Activated CD8-positive, alpha-beta T cell treated with anti-CD3 and anti-CD28 coated beads for 36 hours (primary cell): ENCODE measurements at regions of chr1 and their contacts with region 1.

Region 1: DNA sequence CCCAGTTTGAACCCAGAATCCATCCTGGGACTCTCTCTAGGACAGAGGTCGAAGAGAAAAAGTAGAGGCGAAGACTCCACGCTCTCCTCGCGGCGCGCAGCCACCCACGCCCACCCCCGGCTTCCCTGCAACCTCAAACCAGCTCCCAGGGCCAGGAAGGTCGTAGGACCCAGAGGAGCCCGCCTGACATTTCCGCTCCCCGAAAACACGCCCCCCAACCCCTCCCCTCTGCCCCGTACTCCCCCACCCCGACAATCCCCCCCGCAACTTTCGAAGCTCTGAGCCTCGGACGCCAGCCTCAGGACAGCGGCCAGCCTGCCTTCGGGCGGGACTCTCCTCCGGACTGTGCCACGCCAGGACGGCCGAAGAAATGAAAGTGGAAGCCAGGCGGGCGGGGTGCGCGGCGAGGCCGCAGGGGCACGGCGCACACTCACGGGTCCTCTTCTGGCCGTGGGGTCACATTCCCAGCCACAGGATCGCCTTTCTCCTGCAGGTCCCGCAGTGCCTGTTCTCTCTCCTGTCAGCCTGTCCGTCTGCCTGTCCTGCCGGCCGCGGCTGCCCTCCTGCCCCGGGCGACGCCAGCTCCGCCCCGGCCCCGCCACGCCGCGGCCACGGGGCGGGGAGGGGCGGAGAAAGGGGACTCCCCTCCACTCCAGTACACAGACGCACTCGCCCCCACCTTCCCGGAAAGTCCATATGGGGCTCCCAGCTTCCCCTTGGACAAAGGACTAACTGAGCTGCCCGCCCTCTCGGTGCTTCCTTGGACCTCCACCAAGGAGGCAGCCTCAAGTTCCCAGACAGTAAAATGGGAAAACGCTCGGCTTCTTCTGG is at the start of gene MOB3C:
- DNase-seq: peak; percentile 74
- ATAC-seq: peak; percentile 65
- H3K4me3 Mint-ChIP-seq: peak within 1 kb of the TSS; percentile 88
- H3K27ac Mint-ChIP-seq: peak within 1 kb of the TSS; percentile 91
- H3K4me1 Mint-ChIP-seq: peaks cover 47% of the 10 kb centered on the region
- H3K27me3 Mint-ChIP-seq: no peaks in the 10 kb centered on the region
- CTCF ChIP-seq: no peak
- total RNA-seq, gene MOB3C: 6.3 to 8.7 TPM

Region 2: DNA sequence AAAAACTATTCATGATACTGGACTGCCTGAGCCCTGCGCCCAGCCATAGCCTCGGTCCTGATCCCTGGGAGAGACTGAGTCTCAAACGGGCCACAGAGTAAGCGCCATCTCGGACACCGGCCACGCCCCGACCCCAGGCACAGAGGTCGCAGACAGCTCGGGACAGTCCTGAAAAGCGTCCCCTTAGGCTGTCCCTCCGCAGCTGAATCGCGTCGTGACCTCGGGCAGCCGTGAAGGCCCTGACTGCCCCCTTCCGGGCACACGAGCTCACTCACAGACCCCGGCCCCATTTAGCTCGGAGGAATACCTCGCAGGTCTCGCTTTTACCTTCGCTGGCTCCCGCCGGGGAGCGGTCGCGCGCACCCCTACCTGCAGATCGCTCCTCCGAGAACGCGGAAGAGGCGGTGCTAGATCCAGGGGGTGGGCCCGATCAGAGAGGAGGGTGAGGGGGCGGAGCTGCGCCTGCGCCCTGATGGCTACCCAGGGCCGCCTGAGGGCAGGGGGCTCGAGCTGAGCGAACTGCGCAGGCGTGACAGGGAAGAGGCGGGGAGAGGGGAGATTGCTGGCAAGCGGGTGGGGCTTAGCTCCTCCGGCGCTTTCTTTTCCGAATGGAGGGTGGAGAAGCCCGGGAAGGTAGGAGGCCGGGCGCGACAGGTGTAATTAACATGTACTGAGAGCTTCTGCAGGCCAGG is 12.5 kb before region 1 on chr1 and contains the start of gene MKNK1:
- CTCF ChIA-PET with region 1: interaction called, 47 read pairs
- POLR2A ChIA-PET with region 1: interaction called, 55 read pairs
- intact Hi-C with region 1: no loop called
- DNase-seq: peak; percentile 98
- ATAC-seq: peak; percentile 99
- H3K4me3 Mint-ChIP-seq: peak within 1 kb of the TSS; percentile 89
- H3K27ac Mint-ChIP-seq: peak within 1 kb of the TSS; percentile 87
- H3K4me1 Mint-ChIP-seq: peaks cover 46% of the 10 kb centered on the region
- H3K27me3 Mint-ChIP-seq: no peaks in the 10 kb centered on the region
- CTCF ChIP-seq: no peak
- total RNA-seq, gene MKNK1: 31.1 to 35.5 TPM